Mammary epithelial cell (primary cell): ENCODE measurements at regions of chr10 and their contacts with region 1.

Region 1: GRCh38 chr10:100998991-100999741 is 442 bp upstream of the LZTS2 start:
- DNase-seq: peak; percentile 60
- H3K4me3 ChIP-seq: peak overlapping the region; percentile 84 to 90 (median 90)
- H3K27ac ChIP-seq: peak overlapping the region; percentile 63
- H3K4me1 ChIP-seq: peaks cover 38% of the 10 kb centered on the region
- H3K27me3 ChIP-seq: no peaks in the 10 kb centered on the region
- CTCF ChIP-seq: peak; percentile 51 to 85

Region 2: GRCh38 chr10:100969187-100970075 is 29.7 kb before region 1 on chr10 and contains the start of gene SEMA4G:
- CTCF ChIA-PET with region 1: no interaction called
- dilution Hi-C with region 1: no loop called
- in situ Hi-C with region 1: no loop called
- intact Hi-C with region 1: no loop called
- DNase-seq: no peak
- H3K4me3 ChIP-seq: peak within 1 kb of the TSS; percentile 40 to 58 (median 52)
- H3K27ac ChIP-seq: no peak within 1 kb of the TSS
- H3K4me1 ChIP-seq: peaks cover 10% of the 10 kb centered on the region
- H3K27me3 ChIP-seq: no peaks in the 10 kb centered on the region
- CTCF ChIP-seq: peak; percentile 52 to 74
- total RNA-seq, gene SEMA4G: 0.83 to 3.7 TPM

Region 3: GRCh38 chr10:101031128-101031795 is 32.1 kb after region 1 on chr10 and contains the starts of genes PDZD7 and SFXN3:
- CTCF ChIA-PET with region 1: no interaction called
- dilution Hi-C with region 1: loop called (anchors 5 kb)
- in situ Hi-C with region 1: no loop called
- intact Hi-C with region 1: no loop called
- DNase-seq: peak; percentile 91
- H3K4me3 ChIP-seq: peak within 1 kb of the TSS; percentile 50 to 74 (median 67)
- H3K27ac ChIP-seq: peak within 1 kb of the TSS; percentile 81
- H3K4me1 ChIP-seq: peaks cover 20% of the 10 kb centered on the region
- H3K27me3 ChIP-seq: no peaks in the 10 kb centered on the region
- CTCF ChIP-seq: no peak
- total RNA-seq, gene PDZD7: 0.59 to 2.7 TPM
- total RNA-seq, gene SFXN3: 79.4 to 102 TPM

Region 4: DNA sequence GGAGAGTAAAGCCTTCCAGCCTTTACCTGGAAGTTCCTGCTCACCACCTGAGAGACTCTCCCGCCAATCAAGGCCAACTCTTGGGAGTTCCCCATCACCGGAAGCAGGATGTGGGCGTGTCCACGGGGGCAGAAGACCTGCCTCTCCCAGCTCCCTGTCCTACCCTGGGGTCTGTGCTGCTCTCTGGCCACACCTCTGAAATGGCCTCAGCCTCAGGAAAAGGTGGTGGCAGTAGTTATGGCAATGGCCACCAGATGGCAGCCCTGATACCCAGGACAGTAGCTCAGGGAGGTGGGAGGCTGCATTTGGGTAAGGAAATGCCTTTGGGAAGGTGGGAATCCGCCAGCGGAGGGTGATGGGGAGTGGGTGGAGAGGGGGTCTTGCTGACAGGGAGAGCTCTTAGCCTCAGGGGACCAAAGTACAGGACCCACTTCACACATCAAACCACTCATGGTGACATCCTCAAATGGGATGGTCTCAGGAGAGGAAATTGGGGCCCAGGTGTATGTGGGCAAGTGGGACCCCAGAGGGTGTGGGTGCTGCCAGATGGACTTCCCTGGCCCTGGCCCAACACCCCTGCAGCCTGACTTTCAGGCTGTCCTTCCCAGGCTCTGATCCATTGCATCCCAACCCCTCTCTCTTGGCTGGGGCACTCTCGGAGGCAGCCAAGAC is 96.5 kb after region 1 on chr10:
- CTCF ChIA-PET with region 1: interaction called, 14 read pairs
- dilution Hi-C with region 1: no loop called
- in situ Hi-C with region 1: no loop called
- intact Hi-C with region 1: no loop called
- DNase-seq: peak; percentile 82
- H3K4me3 ChIP-seq: no peak overlapping the region
- H3K27ac ChIP-seq: no peak overlapping the region
- H3K4me1 ChIP-seq: peaks cover 24% of the 10 kb centered on the region
- H3K27me3 ChIP-seq: no peaks in the 10 kb centered on the region
- CTCF ChIP-seq: peak; percentile 95

Region 5: GRCh38 chr10:101272229-101272868 is 273.2 kb after region 1 on chr10:
- CTCF ChIA-PET with region 1: no interaction called
- dilution Hi-C with region 1: no loop called
- in situ Hi-C with region 1: no loop called
- intact Hi-C with region 1: no loop called
- DNase-seq: peak; percentile 50
- H3K4me3 ChIP-seq: no peak overlapping the region
- H3K27ac ChIP-seq: no peak overlapping the region
- H3K4me1 ChIP-seq: peaks cover 2% of the 10 kb centered on the region
- H3K27me3 ChIP-seq: no peaks in the 10 kb centered on the region
- CTCF ChIP-seq: peak; percentile 76 to 89